HEK293T (cell line): ENCODE measurements at regions of chr11 and their contacts with region 1.

Region 1: GRCh38 chr11:65261591-65262380 is at the start of gene POLA2:
- DNase-seq: peak; percentile 100

Region 2: DNA sequence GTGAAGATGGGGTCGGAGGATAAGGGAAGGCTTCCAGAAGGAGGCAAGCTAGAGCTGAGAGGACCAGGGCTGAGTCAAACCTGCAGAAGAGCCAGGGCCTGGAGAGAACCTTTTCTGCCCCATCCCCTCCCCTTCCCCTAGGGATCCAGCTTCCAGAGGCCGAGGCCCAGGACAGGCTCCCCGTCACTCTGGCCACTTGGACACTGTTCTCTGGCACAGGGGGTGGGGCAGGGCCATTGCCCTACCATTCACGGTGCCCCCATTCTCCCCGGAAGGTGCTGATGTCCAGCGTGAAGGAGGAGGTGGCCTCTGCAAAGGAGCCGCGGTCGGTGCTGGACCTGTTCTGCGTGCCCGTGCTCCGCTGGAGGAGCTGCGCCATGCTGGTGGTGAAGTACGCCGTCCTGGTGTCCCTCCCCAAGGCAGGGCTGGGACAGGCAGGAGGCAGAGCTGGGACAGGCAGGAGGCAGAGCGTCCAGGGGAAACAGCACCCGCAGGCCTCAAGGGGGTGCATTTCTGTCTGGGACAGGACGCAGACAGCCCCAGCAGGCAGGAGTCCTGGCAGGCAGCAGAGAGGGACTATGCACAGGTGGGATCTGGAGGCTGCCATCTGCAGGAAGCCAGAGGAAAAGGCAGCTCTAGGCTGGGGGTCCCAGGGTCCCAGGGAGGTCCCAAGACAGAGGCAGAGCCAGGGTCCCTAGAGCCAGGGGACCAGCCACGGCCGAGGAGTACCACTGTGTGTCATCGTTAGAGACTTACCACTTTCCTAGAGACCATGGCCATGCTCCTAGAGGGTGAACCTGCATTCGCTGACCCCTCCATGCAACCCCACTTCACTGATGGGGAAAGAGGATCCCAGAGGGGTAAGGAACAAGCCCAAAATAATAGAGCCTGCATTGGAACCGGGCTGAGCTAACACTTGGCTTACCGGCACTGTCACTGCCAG is 696.6 kb before region 1 on chr11:
- CTCF ChIA-PET with region 1: no interaction called
- POLR2A ChIA-PET with region 1: no interaction called
- DNase-seq: peak; percentile 23

Region 3: GRCh38 chr11:65225279-65226102 is 36.3 kb before region 1 on chr11:
- CTCF ChIA-PET with region 1: interaction called, 3 read pairs
- POLR2A ChIA-PET with region 1: interaction called, 18 read pairs
- DNase-seq: peak; percentile 53

Region 4: GRCh38 chr11:65251476-65251875 is 10.3 kb before region 1 on chr11:
- CTCF ChIA-PET with region 1: no interaction called
- POLR2A ChIA-PET with region 1: interaction called, 21 read pairs
- DNase-seq: no peak

Region 5: GRCh38 chr11:65314501-65315203 is 52.9 kb after region 1 on chr11 and contains the start of gene CDC42EP2:
- CTCF ChIA-PET with region 1: interaction called, 4 read pairs
- POLR2A ChIA-PET with region 1: interaction called, 32 read pairs
- DNase-seq: peak; percentile 89

Region 6: GRCh38 chr11:65354265-65355012 is 92.7 kb after region 1 on chr11 and contains the start of gene TIGD3:
- CTCF ChIA-PET with region 1: no interaction called
- POLR2A ChIA-PET with region 1: interaction called, 10 read pairs
- DNase-seq: peak; percentile 98